ENCODE measurements at regions of chr12 and their contacts with region 1.

Region 1: GRCh38 chr12:61993734-61994345 is 266.4 kb upstream of the USP15 start:
- DNase-seq: peak; percentile 30
- H3K4me3 Mint-ChIP-seq: no peak overlapping the region
- H3K27ac Mint-ChIP-seq: no peak overlapping the region
- H3K4me1 Mint-ChIP-seq: no peaks in the 10 kb centered on the region
- H3K27me3 Mint-ChIP-seq: no peaks in the 10 kb centered on the region
- CTCF ChIP-seq: peak; percentile 55

Region 2: GRCh38 chr12:60257063-60257462 is 1736.8 kb before region 1 on chr12:
- CTCF ChIA-PET with region 1: no interaction called
- intact Hi-C with region 1: loop called (anchors 10 kb)
- DNase-seq: peak; percentile 36
- H3K4me3 Mint-ChIP-seq: no peak overlapping the region
- H3K27ac Mint-ChIP-seq: peak overlapping the region; percentile 1
- H3K4me1 Mint-ChIP-seq: peaks cover 29% of the 10 kb centered on the region
- H3K27me3 Mint-ChIP-seq: no peaks in the 10 kb centered on the region
- CTCF ChIP-seq: no peak

Region 3: GRCh38 chr12:60522684-60523400 is 1471.0 kb before region 1 on chr12:
- CTCF ChIA-PET with region 1: no interaction called
- intact Hi-C with region 1: loop called (anchors 10 kb)
- DNase-seq: no peak
- H3K4me3 Mint-ChIP-seq: no peak overlapping the region
- H3K27ac Mint-ChIP-seq: no peak overlapping the region
- H3K4me1 Mint-ChIP-seq: no peaks in the 10 kb centered on the region
- H3K27me3 Mint-ChIP-seq: no peaks in the 10 kb centered on the region
- CTCF ChIP-seq: no peak

Region 4: DNA sequence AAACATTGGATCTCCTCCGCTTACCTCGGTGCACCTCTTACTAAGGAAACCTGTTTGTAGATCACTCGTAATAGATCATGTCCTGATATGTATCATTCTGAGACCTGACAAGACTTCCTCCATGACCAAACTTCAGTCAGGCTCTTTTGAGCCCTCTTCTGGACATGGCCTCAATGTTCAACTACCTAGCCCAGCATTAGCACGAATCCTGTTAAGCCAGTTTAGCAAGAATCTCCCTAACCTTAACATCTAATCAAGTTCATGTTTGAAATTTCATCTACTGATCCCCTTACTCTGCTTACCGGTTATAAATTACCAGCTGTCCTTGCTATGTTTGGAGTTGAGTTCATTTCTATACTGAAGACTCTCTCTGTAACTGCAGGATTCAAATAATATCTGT is 447.5 kb before region 1 on chr12:
- CTCF ChIA-PET with region 1: no interaction called
- intact Hi-C with region 1: loop called (anchors 2 kb)
- DNase-seq: peak; percentile 52
- H3K4me3 Mint-ChIP-seq: no peak overlapping the region
- H3K27ac Mint-ChIP-seq: no peak overlapping the region
- H3K4me1 Mint-ChIP-seq: peaks cover 7% of the 10 kb centered on the region
- H3K27me3 Mint-ChIP-seq: no peaks in the 10 kb centered on the region
- CTCF ChIP-seq: peak; percentile 30

Region 5: DNA sequence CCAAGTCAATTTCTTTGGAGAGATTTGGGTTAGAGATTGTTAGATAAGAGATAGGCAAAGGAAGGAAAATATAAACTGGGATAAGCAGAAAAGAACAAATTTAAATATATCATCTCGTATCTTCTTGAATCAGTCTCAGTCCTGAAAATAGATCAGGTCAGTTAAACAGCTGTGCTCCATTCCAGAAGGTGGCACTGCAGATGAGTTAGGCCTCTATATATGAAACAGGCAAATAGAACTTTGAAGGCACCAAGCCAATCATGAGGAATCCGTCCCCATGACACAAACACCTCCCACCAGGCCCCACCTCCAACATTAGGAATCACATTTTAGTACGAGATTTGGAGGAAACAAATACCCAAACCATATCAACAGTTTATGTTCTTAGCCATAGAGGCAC is 339.1 kb before region 1 on chr12:
- CTCF ChIA-PET with region 1: no interaction called
- intact Hi-C with region 1: loop called (anchors 1 kb)
- DNase-seq: peak; percentile 21
- H3K4me3 Mint-ChIP-seq: no peak overlapping the region
- H3K27ac Mint-ChIP-seq: no peak overlapping the region
- H3K4me1 Mint-ChIP-seq: no peaks in the 10 kb centered on the region
- H3K27me3 Mint-ChIP-seq: no peaks in the 10 kb centered on the region
- CTCF ChIP-seq: no peak

Measured in Calu3 (cell line).